ENCODE measurements at regions of chr3 and their contacts with region 1.

Region 1: DNA sequence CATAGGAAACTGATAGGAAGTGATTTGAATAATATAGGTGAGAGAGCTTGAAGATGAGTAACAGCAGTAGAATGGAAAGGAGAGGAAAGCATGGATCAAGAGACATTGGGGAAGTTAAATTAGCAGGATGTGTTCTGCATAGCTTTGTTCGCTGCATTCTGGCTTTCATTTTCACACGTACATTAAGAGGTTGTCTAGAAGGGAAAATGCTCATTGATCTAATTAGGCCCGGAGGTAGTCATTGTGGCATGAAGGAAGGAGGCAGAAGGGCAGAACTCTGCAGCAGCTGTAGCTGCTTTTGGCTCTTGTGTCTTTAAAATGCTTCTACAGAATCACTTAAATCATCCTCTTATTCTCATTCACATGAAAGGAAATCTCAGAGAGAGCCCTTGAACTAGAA is 40.3 kb downstream of the KCNAB1 start:
- DNase-seq: no peak
- H3K4me3 ChIP-seq: no peak overlapping the region
- H3K4me1 ChIP-seq: no peaks in the 10 kb centered on the region; the same call in 1 of the 2 replicates
- H3K27me3 ChIP-seq: 0 out of 2 replicates have a peak, but pooled peaks cover 3% of the 10 kb centered on the region

Region 2: GRCh38 chr3:156416846-156417558 is 256.4 kb after region 1 on chr3:
- in situ Hi-C with region 1: no loop called
- DNase-seq: no peak
- H3K4me3 ChIP-seq: no peak overlapping the region
- H3K4me1 ChIP-seq: no peaks in the 10 kb centered on the region
- H3K27me3 ChIP-seq: peaks cover 13% of the 10 kb centered on the region

Region 3: DNA sequence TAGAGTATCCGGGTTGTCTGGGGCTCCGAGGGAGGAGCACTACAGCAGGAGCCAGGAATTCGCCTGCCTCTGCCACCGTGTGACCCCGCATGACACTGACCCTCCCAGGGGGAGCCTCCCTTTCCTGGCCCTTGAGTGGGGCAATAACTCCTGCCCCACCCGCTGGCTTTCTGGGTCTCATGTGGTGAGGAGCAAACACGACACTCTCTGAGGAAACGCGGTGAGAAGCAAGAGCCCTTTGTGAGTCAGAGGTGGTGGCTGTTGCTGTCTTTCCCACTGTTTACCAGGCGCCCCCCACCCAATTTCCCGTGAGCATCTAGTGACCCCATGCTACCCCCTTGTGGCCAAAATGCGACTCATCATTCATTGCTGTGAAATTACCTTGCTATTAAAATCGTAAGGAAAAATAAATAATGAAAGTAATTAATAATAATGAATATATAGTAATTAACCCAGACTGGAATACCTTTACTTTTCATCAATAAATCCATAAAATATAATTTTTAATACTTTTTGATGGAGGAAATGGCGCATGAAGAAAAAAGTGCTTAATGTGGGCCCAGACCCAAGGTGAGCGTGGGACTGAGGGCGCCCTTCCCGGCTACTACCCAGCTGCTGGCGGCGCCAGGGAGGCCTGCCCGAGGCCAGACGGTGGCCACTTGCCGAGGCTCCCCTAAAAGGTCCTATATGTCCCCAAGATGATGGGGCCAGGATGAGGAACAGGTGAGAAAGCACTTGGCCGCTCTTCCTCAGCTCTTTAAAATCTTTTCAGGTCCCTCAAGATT is 970.0 kb after region 1 on chr3:
- in situ Hi-C with region 1: loop called (anchors 10 kb)
- DNase-seq: peak; percentile 27 to 75
- H3K4me3 ChIP-seq: no peak overlapping the region
- H3K4me1 ChIP-seq: peaks cover 8% of the 10 kb centered on the region
- H3K27me3 ChIP-seq: no peaks in the 10 kb centered on the region

Measured in HAP-1 (cell line).